ENCODE measurements at regions of chr16 and their contacts with region 1.

Region 1: GRCh38 chr16:28277537-28278388 is 14.6 kb upstream of the SBK1 start:
- DNase-seq: peak; percentile 59
- H3K4me3 ChIP-seq: peak overlapping the region in 3 of 4 donors; percentile 23 to 61 (median 41)
- H3K27ac ChIP-seq: no peak overlapping the region
- H3K4me1 ChIP-seq: peaks cover 4 to 10% (median 7%) of the 10 kb centered on the region in 3 donors
- H3K27me3 ChIP-seq: peaks cover 0 to 54% (median 0%) of the 10 kb centered on the region in 4 donors
- CTCF ChIP-seq: peak; percentile 94 to 97 (median 96)
- POLR2A ChIP-seq: no peak

Region 2: DNA sequence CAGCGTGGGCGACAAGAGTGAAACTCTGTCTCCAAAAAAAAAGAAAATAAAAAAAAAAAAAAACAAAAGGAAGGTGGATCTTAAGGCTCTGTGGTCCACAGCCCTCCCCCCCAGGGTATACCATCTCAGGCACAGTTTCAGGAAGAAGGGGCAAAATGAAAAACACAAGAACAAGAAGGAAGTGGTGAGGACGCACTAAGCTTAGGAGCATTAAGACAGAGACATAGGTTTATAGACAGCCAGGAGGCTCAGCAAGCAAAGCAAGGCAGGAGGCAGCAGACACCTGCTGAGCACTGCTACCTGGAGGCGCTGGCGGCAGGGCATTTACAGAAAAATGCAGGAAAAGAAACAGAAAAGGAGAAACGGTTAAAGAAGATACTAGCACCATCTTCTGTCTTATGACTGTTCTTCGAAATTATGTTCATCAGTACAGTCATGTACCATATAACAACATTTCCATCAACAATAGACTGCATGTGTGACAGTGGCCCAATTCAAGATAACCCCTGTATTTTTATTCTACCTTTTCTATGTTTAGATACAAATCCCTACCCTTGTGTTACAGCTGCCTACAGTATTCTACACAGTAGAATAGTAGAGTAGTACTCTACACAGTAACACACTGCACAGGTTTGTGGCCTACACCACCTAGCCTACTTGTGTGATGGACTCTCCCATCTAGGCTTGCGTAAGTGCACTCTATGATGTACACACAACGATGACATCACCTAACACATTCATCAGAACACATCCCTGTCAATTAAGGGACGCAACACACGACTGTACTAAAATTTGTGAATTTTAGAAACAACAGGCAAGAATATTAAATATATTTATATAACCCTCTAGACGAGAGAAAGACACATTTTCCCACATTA is 128.5 kb before region 1 on chr16:
- intact Hi-C with region 1: no loop called
- DNase-seq: no peak
- H3K4me3 ChIP-seq: no peak overlapping the region
- H3K27ac ChIP-seq: no peak overlapping the region
- H3K4me1 ChIP-seq: no peaks in the 10 kb centered on the region
- H3K27me3 ChIP-seq: no peaks in the 10 kb centered on the region
- CTCF ChIP-seq: no peak
- POLR2A ChIP-seq: no peak

Region 3: GRCh38 chr16:28317040-28317880 is 39.5 kb after region 1 on chr16:
- intact Hi-C with region 1: loop called (anchors 2 kb)
- DNase-seq: no peak
- H3K4me3 ChIP-seq: no peak overlapping the region
- H3K27ac ChIP-seq: no peak overlapping the region
- H3K4me1 ChIP-seq: peaks cover 0 to 3% (median 0%) of the 10 kb centered on the region in 3 donors
- H3K27me3 ChIP-seq: no peaks in the 10 kb centered on the region
- CTCF ChIP-seq: peak; percentile 78 to 87 (median 85)
- POLR2A ChIP-seq: no peak

Measured in esophagus squamous epithelium (tissue), 5 donors.